ENCODE measurements at regions of chr4 and their contacts with region 1.

Region 1: GRCh38 chr4:176902710-176903323 is 110.1 kb upstream of the VEGFC start:
- DNase-seq: peak; percentile 90
- H3K4me3 ChIP-seq: peak overlapping the region in 1 of 3 experiments; percentile 5
- H3K27ac ChIP-seq: peak overlapping the region; percentile 70
- H3K4me1 ChIP-seq: peaks cover 25% of the 10 kb centered on the region
- H3K27me3 ChIP-seq: no peaks in the 10 kb centered on the region
- CTCF ChIP-seq: no peak

Region 2: DNA sequence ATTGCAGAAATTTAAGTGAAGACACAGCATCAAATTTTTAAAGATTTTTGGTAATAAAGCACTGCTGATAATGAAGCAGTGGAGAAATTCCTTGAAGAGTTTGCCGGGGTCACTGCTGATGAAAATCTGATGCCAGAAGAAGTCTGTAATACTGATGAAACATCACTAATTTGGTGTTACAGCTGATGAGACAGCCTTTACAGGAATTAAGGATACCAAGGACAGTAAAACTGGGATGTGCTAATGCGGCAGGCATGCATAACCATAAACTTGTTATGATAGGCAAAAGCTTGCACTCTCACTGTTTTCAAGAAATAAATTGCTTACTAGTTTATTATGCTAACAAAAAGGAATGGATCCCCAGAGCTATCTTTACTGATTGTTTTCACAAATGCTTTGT is 57.2 kb before region 1 on chr4:
- CTCF ChIA-PET with region 1: no interaction called
- dilution Hi-C with region 1: no loop called
- in situ Hi-C with region 1: no loop called
- intact Hi-C with region 1: loop called (anchors 2 kb)
- DNase-seq: peak; percentile 83
- H3K4me3 ChIP-seq: no peak overlapping the region
- H3K27ac ChIP-seq: no peak overlapping the region
- H3K4me1 ChIP-seq: peaks cover 27% of the 10 kb centered on the region
- H3K27me3 ChIP-seq: no peaks in the 10 kb centered on the region
- CTCF ChIP-seq: no peak

Region 3: GRCh38 chr4:177016541-177017141 is 113.8 kb after region 1 on chr4:
- CTCF ChIA-PET with region 1: no interaction called
- dilution Hi-C with region 1: no loop called
- in situ Hi-C with region 1: no loop called
- intact Hi-C with region 1: no loop called
- DNase-seq: peak; percentile 79
- H3K4me3 ChIP-seq: no peak overlapping the region
- H3K27ac ChIP-seq: peak overlapping the region; percentile 88
- H3K4me1 ChIP-seq: peaks cover 13% of the 10 kb centered on the region
- H3K27me3 ChIP-seq: no peaks in the 10 kb centered on the region
- CTCF ChIP-seq: no peak

Region 4: GRCh38 chr4:177484613-177485021 is 581.8 kb after region 1 on chr4:
- CTCF ChIA-PET with region 1: no interaction called
- dilution Hi-C with region 1: no loop called
- in situ Hi-C with region 1: no loop called
- intact Hi-C with region 1: no loop called
- DNase-seq: peak; percentile 95
- H3K4me3 ChIP-seq: no peak overlapping the region
- H3K27ac ChIP-seq: peak overlapping the region; percentile 90
- H3K4me1 ChIP-seq: peaks cover 44% of the 10 kb centered on the region
- H3K27me3 ChIP-seq: no peaks in the 10 kb centered on the region
- CTCF ChIP-seq: no peak